Heart right ventricle (tissue), 16 donors: ENCODE measurements at regions of chr1 and their contacts with region 1.

Region 1: GRCh38 chr1:228734881-228735801 is at the start of gene RHOU:
- DNase-seq: peak; percentile 70 to 83
- ATAC-seq: peak; percentile 86 to 96 (median 91)
- H3K4me3 ChIP-seq: peak within 1 kb of the TSS; percentile 62 to 91 (median 88)
- H3K27ac ChIP-seq: peak within 1 kb of the TSS; percentile 22 to 97 (median 90)
- H3K4me1 ChIP-seq: peaks cover 0 to 45% (median 14%) of the 10 kb centered on the region in 9 donors
- H3K27me3 ChIP-seq: peaks cover 0 to 12% (median 0%) of the 10 kb centered on the region in 7 donors
- CTCF ChIP-seq: peak; percentile 59 to 98 (median 86)
- total RNA-seq, gene RHOU: 1.00 to 10.8 (median 3.2) TPM

Region 2: GRCh38 chr1:228781161-228781808 is 46.1 kb after region 1 on chr1:
- intact Hi-C with region 1: loop called in 1 of 10 experiments (anchors 2 kb)
- DNase-seq: peak in 1 of 2 donors; percentile 10
- ATAC-seq: peak in 5 of 8 donors; percentile 54 to 85 (median 74)
- H3K4me3 ChIP-seq: no peak overlapping the region
- H3K27ac ChIP-seq: peak overlapping the region in 1 of 10 donors; percentile 18
- H3K4me1 ChIP-seq: peaks cover 0 to 20% (median 8%) of the 10 kb centered on the region in 9 donors
- H3K27me3 ChIP-seq: peaks cover 0 to 58% (median 11%) of the 10 kb centered on the region in 7 donors
- CTCF ChIP-seq: no peak

Region 3: DNA sequence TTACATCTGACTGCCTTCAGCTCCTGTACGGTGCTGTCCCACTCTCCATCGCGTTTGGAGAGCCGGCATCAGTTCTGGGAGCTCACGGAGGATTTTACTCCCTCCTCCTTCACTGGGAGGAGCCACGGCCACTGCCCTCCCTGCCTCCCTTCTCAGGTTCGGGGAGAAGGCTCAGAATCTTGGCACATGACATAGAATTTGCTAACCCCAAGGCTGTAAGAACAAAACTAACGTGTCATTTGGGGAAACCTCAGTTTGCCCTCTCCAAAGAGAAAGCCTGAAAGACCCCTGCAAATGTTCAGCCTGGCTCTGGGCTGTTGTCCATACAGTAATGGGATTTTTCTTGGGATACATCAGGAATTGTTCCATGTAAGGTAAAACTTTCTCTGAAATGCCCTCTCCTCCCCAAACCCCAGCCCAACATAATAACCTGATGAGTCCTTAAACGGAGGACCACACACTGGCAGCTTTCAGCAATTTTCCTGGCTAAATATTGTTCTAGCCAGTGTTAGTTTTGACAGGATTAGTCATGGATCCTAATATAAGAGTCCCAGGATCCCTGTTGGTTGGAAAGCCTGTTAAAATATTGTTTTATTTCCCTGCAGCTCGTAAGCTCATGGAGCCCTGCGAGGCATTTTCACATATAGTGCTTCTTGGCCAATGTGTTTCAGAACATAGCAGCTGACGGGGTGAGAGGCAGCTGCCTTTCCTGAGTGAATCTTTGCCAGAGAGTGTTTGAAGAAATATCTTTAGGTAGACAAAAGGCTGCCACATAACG is 99.0 kb after region 1 on chr1:
- intact Hi-C with region 1: no loop called
- DNase-seq: no peak
- ATAC-seq: no peak
- H3K4me3 ChIP-seq: no peak overlapping the region
- H3K27ac ChIP-seq: no peak overlapping the region
- H3K4me1 ChIP-seq: peaks cover 0 to 19% (median 10%) of the 10 kb centered on the region in 9 donors
- H3K27me3 ChIP-seq: peaks cover 0 to 15% (median 9%) of the 10 kb centered on the region in 7 donors
- CTCF ChIP-seq: no peak

Region 4: GRCh38 chr1:228989992-228990827 is 255.1 kb after region 1 on chr1:
- intact Hi-C with region 1: loop called in 1 of 10 experiments (anchors 10 kb)
- DNase-seq: peak; percentile 70 to 75
- ATAC-seq: peak; percentile 72 to 92 (median 84)
- H3K4me3 ChIP-seq: no peak overlapping the region
- H3K27ac ChIP-seq: peak overlapping the region in 9 of 10 donors; percentile 34 to 86 (median 58)
- H3K4me1 ChIP-seq: peaks cover 4 to 58% (median 30%) of the 10 kb centered on the region in 9 donors
- H3K27me3 ChIP-seq: no peaks in the 10 kb centered on the region
- CTCF ChIP-seq: no peak

Region 5: GRCh38 chr1:229156872-229157271 is 421.7 kb after region 1 on chr1:
- intact Hi-C with region 1: loop called (anchors 1 to 10 kb)
- DNase-seq: peak in 1 of 2 donors; percentile 38
- ATAC-seq: peak; percentile 51 to 82 (median 70)
- H3K4me3 ChIP-seq: no peak overlapping the region
- H3K27ac ChIP-seq: peak overlapping the region in 2 of 10 donors; percentile 0 to 84
- H3K4me1 ChIP-seq: peaks cover 0 to 57% (median 0%) of the 10 kb centered on the region in 9 donors
- H3K27me3 ChIP-seq: peaks cover 0 to 7% (median 0%) of the 10 kb centered on the region in 7 donors
- CTCF ChIP-seq: peak in 8 of 9 donors; percentile 26 to 74 (median 58)

Region 6: GRCh38 chr1:229227298-229227919 is 492.3 kb after region 1 on chr1:
- intact Hi-C with region 1: loop called in 8 of 10 experiments (anchors 1 to 10 kb)
- DNase-seq: peak; percentile 73 to 85
- ATAC-seq: peak; percentile 29 to 59 (median 42)
- H3K4me3 ChIP-seq: no peak overlapping the region
- H3K27ac ChIP-seq: peak overlapping the region in 1 of 10 donors; percentile 37
- H3K4me1 ChIP-seq: peaks cover 6 to 44% (median 26%) of the 10 kb centered on the region in 9 donors
- H3K27me3 ChIP-seq: no peaks in the 10 kb centered on the region
- CTCF ChIP-seq: peak; percentile 75 to 90 (median 87)